ENCODE measurements at regions of chr1 and their contacts with region 1.

Region 1: DNA sequence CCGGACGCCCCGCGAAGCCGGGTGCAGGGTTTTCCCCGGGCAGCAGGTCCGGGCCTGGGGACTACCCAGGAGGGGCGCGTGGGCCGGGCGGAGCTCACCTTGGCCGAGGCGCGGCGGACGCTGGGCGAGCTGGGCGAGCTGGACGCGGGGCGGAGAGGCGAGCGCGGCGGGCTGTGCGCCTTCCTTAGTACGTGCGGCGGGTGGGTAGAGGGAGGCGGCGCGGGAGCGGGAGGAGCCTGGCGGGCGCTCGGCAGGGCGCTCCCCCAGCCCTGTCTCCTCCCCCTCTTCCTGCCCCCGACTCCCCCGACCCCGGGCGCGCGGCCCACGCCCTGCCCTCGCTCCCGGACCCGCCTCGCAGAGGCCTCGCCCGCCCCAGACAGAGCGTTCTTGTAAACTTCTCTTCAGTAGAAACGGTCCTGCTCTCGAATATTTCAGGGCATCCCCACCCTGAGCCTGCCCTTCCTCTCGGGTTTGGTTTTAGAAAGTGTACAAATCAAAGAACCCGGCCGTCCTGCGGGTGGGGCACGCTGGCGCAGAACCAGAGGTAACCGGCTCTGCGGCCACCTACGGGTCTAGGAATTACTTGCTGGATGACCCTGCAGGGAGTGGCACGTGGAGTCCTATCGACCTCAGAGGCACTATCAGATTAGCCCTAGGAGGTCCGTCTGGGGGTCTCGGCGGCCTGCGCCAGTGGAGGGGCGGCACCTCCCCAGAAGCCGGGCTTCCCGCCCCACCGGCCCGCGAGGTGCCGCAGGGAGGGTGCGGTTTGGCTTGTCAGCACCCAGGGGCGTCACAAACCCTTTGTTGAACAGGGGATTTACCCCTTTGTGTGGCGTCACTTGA is at the start of gene S100A10:
- DNase-seq: peak; percentile 63 to 91 (median 80)
- ATAC-seq: peak; percentile 88
- H3K4me3 ChIP-seq: peak within 1 kb of the TSS; percentile 95
- H3K4me3 Mint-ChIP-seq: peak within 1 kb of the TSS; percentile 94
- H3K27ac ChIP-seq: peak within 1 kb of the TSS; percentile 82 to 92
- H3K27ac Mint-ChIP-seq: peak within 1 kb of the TSS; percentile 91
- H3K4me1 ChIP-seq: peaks cover 53% of the 10 kb centered on the region
- H3K4me1 Mint-ChIP-seq: peaks cover 58% of the 10 kb centered on the region
- H3K27me3 ChIP-seq: no peaks in the 10 kb centered on the region
- H3K27me3 Mint-ChIP-seq: no peaks in the 10 kb centered on the region
- CTCF ChIP-seq: no peak
- total RNA-seq, gene S100A10: 189 to 204 TPM

Region 2: DNA sequence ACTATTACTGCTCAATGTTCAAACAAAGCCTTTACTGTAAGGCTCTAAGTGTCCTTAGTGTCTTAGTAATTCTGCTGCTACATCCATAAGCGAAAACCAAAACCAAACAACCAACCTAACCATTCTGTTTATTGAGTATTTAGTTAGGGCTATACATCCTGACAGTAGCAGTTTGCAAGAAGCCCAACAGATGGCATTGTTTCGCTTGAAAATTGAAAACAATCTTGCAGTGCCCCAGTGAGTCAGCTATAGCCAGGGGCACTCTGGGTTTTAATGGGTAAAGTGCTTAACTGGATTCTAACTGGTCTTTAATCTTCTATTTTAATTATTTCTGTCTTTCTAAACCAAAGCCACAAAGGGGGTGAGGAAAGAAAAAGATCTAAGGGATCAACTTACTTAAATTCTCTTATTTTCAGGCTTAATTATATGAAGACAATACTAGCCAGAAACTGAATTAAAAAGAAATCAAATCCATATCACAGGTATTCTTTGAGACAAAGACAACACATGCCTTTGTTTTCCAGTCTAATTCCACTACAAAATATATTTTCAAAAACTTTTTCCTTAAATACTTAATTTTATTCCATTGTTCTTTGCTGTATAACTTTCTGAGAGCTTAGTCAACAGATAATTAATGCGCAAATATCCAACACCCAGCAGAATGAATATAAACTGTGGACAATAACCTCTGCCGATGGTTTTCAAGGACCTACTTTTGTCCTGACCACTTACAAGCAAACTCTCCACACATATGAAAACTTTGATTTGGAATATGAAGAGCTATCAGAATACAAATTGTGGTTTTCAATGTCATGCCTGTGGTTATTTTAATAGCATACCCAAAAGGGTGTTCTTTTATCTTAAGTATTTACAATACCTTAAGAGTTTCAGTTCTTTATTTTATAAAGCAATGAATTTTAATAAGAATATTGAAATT is 549.8 kb before region 1 on chr1:
- CTCF ChIA-PET with region 1: no interaction called
- POLR2A ChIA-PET with region 1: no interaction called
- intact Hi-C with region 1: loop called in 1 of 2 experiments (anchors 10 kb)
- DNase-seq: peak; percentile 40 to 87 (median 60)
- ATAC-seq: peak; percentile 99
- H3K4me3 ChIP-seq: no peak overlapping the region
- H3K4me3 Mint-ChIP-seq: no peak overlapping the region
- H3K27ac ChIP-seq: no peak overlapping the region
- H3K27ac Mint-ChIP-seq: peak overlapping the region; percentile 14
- H3K4me1 ChIP-seq: peaks cover 11% of the 10 kb centered on the region
- H3K4me1 Mint-ChIP-seq: peaks cover 55% of the 10 kb centered on the region
- H3K27me3 ChIP-seq: no peaks in the 10 kb centered on the region
- H3K27me3 Mint-ChIP-seq: no peaks in the 10 kb centered on the region
- CTCF ChIP-seq: peak; percentile 85

Region 3: GRCh38 chr1:151594143-151594625 is 399.7 kb before region 1 on chr1:
- CTCF ChIA-PET with region 1: no interaction called
- POLR2A ChIA-PET with region 1: no interaction called
- intact Hi-C with region 1: loop called (anchors 5 to 10 kb)
- DNase-seq: peak; percentile 80 to 92 (median 86)
- ATAC-seq: peak; percentile 100
- H3K4me3 ChIP-seq: peak overlapping the region; percentile 14
- H3K4me3 Mint-ChIP-seq: peak overlapping the region; percentile 49
- H3K27ac ChIP-seq: no peak overlapping the region
- H3K27ac Mint-ChIP-seq: no peak overlapping the region
- H3K4me1 ChIP-seq: peaks cover 11% of the 10 kb centered on the region
- H3K4me1 Mint-ChIP-seq: peaks cover 10% of the 10 kb centered on the region
- H3K27me3 ChIP-seq: peaks cover 0 to 6% of the 10 kb centered on the region in 2 experiments
- H3K27me3 Mint-ChIP-seq: peaks cover 4% of the 10 kb centered on the region
- CTCF ChIP-seq: peak; percentile 95

Region 4: DNA sequence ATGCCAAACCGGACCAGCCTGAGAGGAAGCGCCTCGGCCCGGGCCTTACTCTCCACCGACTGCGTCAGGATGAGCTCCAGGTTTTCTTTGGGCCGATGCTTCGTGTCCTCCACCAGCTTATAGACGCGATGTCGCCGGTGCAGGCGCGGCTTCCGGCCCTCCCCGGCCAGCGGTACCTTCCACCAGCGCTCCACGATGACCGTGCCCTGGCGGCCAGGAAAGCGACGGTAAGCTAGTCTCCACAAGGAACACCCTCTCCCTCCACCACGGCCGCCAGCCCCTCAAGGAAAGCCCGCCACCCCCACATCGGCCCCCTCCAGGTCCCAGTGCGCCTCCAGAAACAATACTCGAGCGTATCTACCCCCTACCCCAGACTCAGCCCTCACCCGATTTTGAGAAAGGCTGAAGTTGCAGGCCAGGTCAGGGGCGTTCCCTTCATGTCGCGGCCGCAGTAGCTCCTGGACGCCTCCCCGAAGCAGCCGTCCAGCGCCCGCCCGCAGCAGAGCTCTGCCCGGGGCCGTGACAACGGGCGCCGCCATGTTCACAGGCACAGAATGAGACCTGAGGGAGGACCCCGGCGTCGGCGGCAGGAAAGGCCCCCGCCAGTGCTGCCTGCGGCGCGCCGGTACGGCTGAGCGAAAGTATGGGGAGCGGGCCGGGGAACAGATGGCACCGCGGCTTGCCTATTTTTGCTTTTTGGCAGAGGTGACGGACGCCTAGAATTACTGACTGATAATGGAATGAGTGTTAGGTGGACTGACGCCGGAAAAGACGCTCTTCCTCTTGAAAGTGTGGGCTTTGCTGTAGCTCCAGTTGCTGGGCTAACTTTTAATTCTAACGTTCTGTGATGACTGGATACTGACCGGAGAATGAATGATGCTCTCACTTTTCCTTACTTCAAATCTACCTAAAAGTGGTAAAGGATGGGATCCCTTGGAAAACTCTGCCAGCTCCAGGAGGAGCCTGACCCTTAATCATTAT is 230.6 kb before region 1 on chr1 and contains the start of gene MRPL9:
- CTCF ChIA-PET with region 1: no interaction called
- POLR2A ChIA-PET with region 1: no interaction called
- intact Hi-C with region 1: loop called in 1 of 2 experiments (anchors 10 kb)
- DNase-seq: peak; percentile 71 to 89 (median 83)
- ATAC-seq: peak; percentile 99
- H3K4me3 ChIP-seq: peak within 1 kb of the TSS; percentile 94
- H3K4me3 Mint-ChIP-seq: peak within 1 kb of the TSS; percentile 94
- H3K27ac ChIP-seq: peak within 1 kb of the TSS; percentile 75 to 86
- H3K27ac Mint-ChIP-seq: peak within 1 kb of the TSS; percentile 98
- H3K4me1 ChIP-seq: peaks cover 14% of the 10 kb centered on the region
- H3K4me1 Mint-ChIP-seq: peaks cover 29% of the 10 kb centered on the region
- H3K27me3 ChIP-seq: no peaks in the 10 kb centered on the region
- H3K27me3 Mint-ChIP-seq: no peaks in the 10 kb centered on the region
- CTCF ChIP-seq: no peak
- total RNA-seq, gene MRPL9: 152 to 164 TPM

Region 5: GRCh38 chr1:151888972-151889570 is 104.8 kb before region 1 on chr1:
- CTCF ChIA-PET with region 1: interaction called, 3 read pairs
- POLR2A ChIA-PET with region 1: interaction called, 3 read pairs
- intact Hi-C with region 1: loop called (anchors 1 kb)
- DNase-seq: peak in 3 of 14 experiments; percentile 52 to 63 (median 62)
- ATAC-seq: peak; percentile 69
- H3K4me3 ChIP-seq: no peak overlapping the region
- H3K4me3 Mint-ChIP-seq: no peak overlapping the region
- H3K27ac ChIP-seq: no peak overlapping the region
- H3K27ac Mint-ChIP-seq: peak overlapping the region; percentile 76
- H3K4me1 ChIP-seq: peaks cover 16% of the 10 kb centered on the region
- H3K4me1 Mint-ChIP-seq: peaks cover 40% of the 10 kb centered on the region
- H3K27me3 ChIP-seq: no peaks in the 10 kb centered on the region
- H3K27me3 Mint-ChIP-seq: no peaks in the 10 kb centered on the region
- CTCF ChIP-seq: peak; percentile 68

Region 6: GRCh38 chr1:151968058-151968457 is 25.8 kb before region 1 on chr1:
- CTCF ChIA-PET with region 1: interaction called, 93 read pairs
- POLR2A ChIA-PET with region 1: interaction called, 5 read pairs
- intact Hi-C with region 1: loop called (anchors 1 kb)
- DNase-seq: peak; percentile 20 to 83 (median 38)
- ATAC-seq: peak; percentile 99
- H3K4me3 ChIP-seq: no peak overlapping the region
- H3K4me3 Mint-ChIP-seq: no peak overlapping the region
- H3K27ac ChIP-seq: no peak overlapping the region
- H3K27ac Mint-ChIP-seq: no peak overlapping the region
- H3K4me1 ChIP-seq: peaks cover 9% of the 10 kb centered on the region
- H3K4me1 Mint-ChIP-seq: peaks cover 7% of the 10 kb centered on the region
- H3K27me3 ChIP-seq: no peaks in the 10 kb centered on the region
- H3K27me3 Mint-ChIP-seq: no peaks in the 10 kb centered on the region
- CTCF ChIP-seq: peak; percentile 72

Region 7: GRCh38 chr1:152047730-152048402 is 54.0 kb after region 1 on chr1:
- CTCF ChIA-PET with region 1: no interaction called
- POLR2A ChIA-PET with region 1: no interaction called
- intact Hi-C with region 1: loop called in 1 of 2 experiments (anchors 2 kb)
- DNase-seq: peak; percentile 65 to 95 (median 84)
- ATAC-seq: peak; percentile 89
- H3K4me3 ChIP-seq: peak overlapping the region; percentile 26
- H3K4me3 Mint-ChIP-seq: peak overlapping the region; percentile 72
- H3K27ac ChIP-seq: peak overlapping the region; percentile 94 to 96
- H3K27ac Mint-ChIP-seq: peak overlapping the region; percentile 96
- H3K4me1 ChIP-seq: peaks cover 39% of the 10 kb centered on the region
- H3K4me1 Mint-ChIP-seq: peaks cover 31% of the 10 kb centered on the region
- H3K27me3 ChIP-seq: peaks cover 0 to under 1% of the 10 kb centered on the region in 2 experiments
- H3K27me3 Mint-ChIP-seq: peaks cover 4% of the 10 kb centered on the region
- CTCF ChIP-seq: peak; percentile 52